ENCODE measurements at regions of chr1 and their contacts with region 1.

Region 1: DNA sequence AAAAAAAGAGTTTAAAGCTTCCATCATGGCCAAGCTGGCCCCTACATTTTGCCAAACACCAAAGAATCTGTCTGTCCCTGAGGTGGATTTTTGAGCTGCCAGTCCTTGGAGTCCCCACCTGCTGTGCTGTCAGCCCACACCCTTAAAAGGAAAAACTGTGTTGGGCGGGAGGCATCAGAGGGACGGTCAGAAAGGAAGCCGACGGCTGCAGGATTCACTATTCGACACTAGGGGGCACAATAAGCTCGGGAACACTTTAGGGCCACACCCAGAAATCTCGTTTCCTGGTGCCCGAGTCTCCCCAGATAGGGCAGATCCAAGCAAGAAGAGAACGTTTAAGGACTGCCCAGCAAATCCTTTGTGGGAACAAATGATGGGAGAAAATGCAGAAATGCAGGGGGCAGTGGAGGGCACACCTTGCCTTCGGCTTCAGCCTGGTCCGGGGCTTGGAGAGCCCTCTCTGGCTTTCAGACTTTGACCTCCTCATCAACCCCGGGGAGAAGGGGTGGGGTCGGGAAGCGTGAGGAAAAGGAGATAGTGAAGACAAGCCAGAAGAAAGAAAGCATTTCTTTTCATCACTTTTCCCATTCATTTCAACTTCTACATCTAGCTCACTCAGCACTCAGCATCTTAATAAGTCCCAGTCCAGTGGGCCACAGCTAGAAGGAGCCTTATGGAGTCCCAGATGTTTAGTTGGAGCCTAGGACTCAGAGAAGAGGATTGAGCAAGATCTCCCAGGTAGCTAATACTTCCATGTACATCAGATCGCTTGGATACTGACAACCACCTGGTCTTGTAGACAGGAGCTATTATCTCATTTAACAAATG is 5.0 kb upstream of the CTTNBP2NL start:
- DNase-seq: peak; percentile 89
- ATAC-seq: peak; percentile 85
- H3K4me3 ChIP-seq: peak overlapping the region; percentile 43 to 51
- H3K27ac ChIP-seq: peak overlapping the region; percentile 16
- H3K4me1 ChIP-seq: peaks cover 19 to 48% of the 10 kb centered on the region in 2 experiments
- H3K27me3 ChIP-seq: no peaks in the 10 kb centered on the region
- CTCF ChIP-seq: peak; percentile 92 to 94 (median 94)
- POLR2A ChIP-seq: no peak
- RAD21 ChIP-seq: peak; percentile 99

Region 2: DNA sequence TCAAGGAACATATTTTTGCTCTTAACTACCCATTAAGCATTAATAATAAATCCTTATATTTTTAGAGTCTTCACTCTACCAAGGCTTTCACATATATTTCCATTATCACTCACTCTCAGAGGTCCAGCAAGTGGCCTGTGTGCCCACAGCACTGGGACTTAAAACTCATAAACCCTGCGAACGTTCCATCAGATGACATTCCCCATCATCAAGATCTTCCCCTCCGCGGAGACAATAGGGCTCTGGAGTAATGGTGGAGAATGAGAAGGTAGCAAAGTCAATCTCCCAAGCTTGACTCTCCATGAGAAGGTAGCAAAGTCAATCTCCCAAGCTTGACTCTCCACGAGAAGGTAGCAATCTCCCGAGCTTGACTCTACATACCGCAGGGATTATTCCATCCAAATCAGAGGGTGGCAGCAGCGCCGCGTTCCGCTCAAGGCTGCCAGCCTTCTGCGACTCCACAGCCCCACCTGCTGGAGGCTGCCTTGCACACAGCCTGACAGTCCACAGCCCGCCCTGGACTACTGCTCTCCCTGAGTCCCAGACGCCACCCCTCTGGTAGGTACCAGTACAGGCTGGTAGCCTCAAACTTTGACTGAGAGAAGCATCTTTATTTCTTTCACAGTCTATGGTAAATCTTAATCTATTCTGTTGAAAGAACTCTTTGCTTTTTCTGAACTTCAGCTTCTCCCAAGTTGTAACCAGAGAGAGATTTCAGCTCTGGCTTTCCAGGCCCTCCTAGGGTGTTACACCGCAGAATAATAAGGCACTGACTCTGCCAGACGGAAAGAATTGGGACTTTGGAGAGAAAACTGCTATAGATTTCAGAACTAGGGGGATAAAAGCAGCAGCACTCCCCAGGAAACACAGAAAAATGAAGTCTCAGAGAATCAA is 21.4 kb before region 1 on chr1:
- CTCF ChIA-PET with region 1: interaction called, 13 read pairs
- POLR2A ChIA-PET with region 1: no interaction called
- RAD21 ChIA-PET with region 1: no interaction called
- intact Hi-C with region 1: no loop called
- DNase-seq: peak; percentile 76
- ATAC-seq: peak; percentile 100
- H3K4me3 ChIP-seq: peak overlapping the region in 1 of 2 experiments; percentile 21; a peak in 1 of 4 replicates
- H3K27ac ChIP-seq: no peak overlapping the region
- H3K4me1 ChIP-seq: peaks cover 0 to 4% of the 10 kb centered on the region in 2 experiments; a peak in 1 of 4 replicates
- H3K27me3 ChIP-seq: no peaks in the 10 kb centered on the region
- CTCF ChIP-seq: peak; percentile 97 to 99 (median 98)
- POLR2A ChIP-seq: no peak
- RAD21 ChIP-seq: peak; percentile 95

Region 3: DNA sequence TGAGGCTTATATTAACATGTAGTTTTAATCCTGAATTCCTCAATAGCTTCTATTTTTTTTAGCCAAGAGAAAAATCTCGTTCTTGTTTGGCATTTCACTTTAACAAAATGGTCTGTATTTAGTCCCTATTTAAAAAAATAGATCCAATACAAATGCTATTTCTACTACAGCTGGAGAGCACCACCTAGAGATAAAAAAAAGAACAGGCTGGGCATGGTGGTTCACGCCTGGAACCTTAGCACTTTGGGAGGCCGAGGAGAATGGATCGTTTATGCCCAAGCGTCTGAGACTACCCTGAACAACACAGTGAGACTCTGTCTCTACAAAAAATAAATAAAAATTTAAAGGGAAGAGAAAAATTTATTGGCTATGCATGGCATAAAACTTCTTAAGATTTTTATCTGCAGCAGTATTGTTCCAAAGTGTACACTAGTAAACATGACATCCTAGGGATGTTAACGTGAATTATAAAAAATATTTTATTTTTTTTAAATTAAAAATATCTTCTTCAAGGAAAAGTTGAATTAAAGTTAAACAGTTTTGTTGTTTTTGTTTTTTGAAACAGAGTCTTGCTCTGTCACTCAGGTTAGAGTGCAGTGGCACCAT is 223.6 kb after region 1 on chr1:
- CTCF ChIA-PET with region 1: interaction called, 15 read pairs
- POLR2A ChIA-PET with region 1: interaction called, 5 read pairs
- RAD21 ChIA-PET with region 1: interaction called in 1 of 2 experiments, 3 read pairs
- intact Hi-C with region 1: loop called (anchors 1 kb)
- DNase-seq: no peak
- ATAC-seq: 0 out of 2 replicates have a peak, but pooled peaks have one; percentile 43
- H3K4me3 ChIP-seq: no peak overlapping the region
- H3K27ac ChIP-seq: no peak overlapping the region
- H3K4me1 ChIP-seq: peaks cover 9 to 14% of the 10 kb centered on the region in 2 experiments; a peak in 3 of 4 replicates
- H3K27me3 ChIP-seq: no peaks in the 10 kb centered on the region
- CTCF ChIP-seq: peak; percentile 65 to 74 (median 68); a peak in 5 of 6 replicates
- POLR2A ChIP-seq: no peak
- RAD21 ChIP-seq: peak; percentile 80

Region 4: DNA sequence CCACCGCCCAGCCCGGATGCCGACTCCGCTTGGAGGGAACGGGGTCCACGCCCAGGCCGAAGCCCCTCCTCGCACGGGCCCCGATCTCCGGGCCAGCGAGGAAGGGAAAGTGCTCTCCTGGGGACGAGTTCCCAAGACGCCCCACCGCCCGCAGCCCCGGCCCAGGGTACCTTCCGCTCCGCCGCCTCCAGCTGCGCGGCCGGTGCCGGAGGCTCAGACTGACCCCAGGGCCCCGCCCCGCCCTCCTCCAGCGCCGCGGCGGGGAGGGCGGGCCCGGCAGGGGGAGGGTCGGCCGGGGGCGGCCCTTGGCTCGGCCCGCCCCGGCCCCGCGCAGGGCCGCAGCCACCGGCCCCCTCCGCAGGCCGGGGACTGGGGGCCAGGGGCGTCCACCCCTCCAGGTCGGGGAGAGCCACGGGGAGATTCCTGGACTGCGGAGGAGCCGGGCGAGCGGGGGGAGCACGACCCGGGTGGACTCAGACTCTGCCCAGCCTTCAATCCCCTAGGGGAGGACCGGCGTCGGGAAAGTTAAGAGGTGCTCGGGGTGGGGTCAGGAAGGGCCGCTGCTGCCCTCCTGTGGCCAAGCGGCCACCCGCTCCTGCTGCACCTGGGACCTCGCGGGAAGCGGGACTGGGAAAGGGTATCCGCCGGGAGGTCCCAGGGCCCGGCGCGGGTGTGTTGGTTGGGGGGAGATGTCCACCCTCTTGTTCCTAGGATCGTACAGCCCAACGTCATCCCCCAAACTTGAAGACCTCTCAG is 316.1 kb after region 1 on chr1 and contains the start of gene RHOC:
- CTCF ChIA-PET with region 1: interaction called, 16 read pairs
- POLR2A ChIA-PET with region 1: interaction called, 5 read pairs
- RAD21 ChIA-PET with region 1: no interaction called
- intact Hi-C with region 1: loop called (anchors 1 kb)
- DNase-seq: peak; percentile 75
- ATAC-seq: peak; percentile 82
- H3K4me3 ChIP-seq: peak within 1 kb of the TSS; percentile 87 to 90
- H3K27ac ChIP-seq: peak within 1 kb of the TSS; percentile 77
- H3K4me1 ChIP-seq: peaks cover 22 to 44% of the 10 kb centered on the region in 2 experiments
- H3K27me3 ChIP-seq: no peaks in the 10 kb centered on the region
- CTCF ChIP-seq: peak in 2 of 3 experiments; percentile 78 to 93; a peak in 4 of 6 replicates
- POLR2A ChIP-seq: no peak
- RAD21 ChIP-seq: no peak
- total RNA-seq, gene RHOC: 154 TPM

Region 5: GRCh38 chr1:112803906-112804762 is 413.1 kb after region 1 on chr1:
- CTCF ChIA-PET with region 1: interaction called, 11 read pairs
- POLR2A ChIA-PET with region 1: no interaction called
- RAD21 ChIA-PET with region 1: no interaction called
- intact Hi-C with region 1: loop called (anchors 2 kb)
- DNase-seq: peak; percentile 61
- ATAC-seq: peak; percentile 97
- H3K4me3 ChIP-seq: no peak overlapping the region
- H3K27ac ChIP-seq: no peak overlapping the region
- H3K4me1 ChIP-seq: no peaks in the 10 kb centered on the region
- H3K27me3 ChIP-seq: no peaks in the 10 kb centered on the region
- CTCF ChIP-seq: peak; percentile 93 to 96 (median 93)
- POLR2A ChIP-seq: no peak
- RAD21 ChIP-seq: peak; percentile 100

Measured in HCT116 (cell line).